GM10248 (cell line): ENCODE measurements at regions of chr10 and their contacts with region 1.

Region 1: DNA sequence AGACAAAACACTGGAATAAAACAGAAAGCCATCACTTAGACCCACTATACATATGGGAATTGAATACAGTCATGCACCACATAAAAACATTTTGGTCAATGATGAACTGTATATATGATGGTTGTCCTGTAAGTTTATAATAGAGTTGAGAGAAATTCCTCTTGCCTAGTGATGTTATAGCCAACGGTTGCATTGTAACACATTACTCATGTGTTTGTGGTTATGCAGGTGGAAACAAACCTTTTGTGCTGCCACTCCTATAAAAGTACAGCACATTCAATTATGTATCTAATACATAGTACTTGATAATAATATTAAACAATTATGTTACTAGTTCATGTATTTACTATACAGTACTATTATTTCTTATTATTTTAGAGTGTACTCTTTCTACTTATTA is 381.2 kb upstream of the MBL2 start:
- DNase-seq: no peak
- CTCF ChIP-seq: no peak

Region 2: GRCh38 chr10:52801947-52802346 is 351.9 kb before region 1 on chr10:
- CTCF ChIA-PET with region 1: no interaction called
- POLR2A ChIA-PET with region 1: no interaction called
- DNase-seq: no peak
- CTCF ChIP-seq: no peak

Region 3: DNA sequence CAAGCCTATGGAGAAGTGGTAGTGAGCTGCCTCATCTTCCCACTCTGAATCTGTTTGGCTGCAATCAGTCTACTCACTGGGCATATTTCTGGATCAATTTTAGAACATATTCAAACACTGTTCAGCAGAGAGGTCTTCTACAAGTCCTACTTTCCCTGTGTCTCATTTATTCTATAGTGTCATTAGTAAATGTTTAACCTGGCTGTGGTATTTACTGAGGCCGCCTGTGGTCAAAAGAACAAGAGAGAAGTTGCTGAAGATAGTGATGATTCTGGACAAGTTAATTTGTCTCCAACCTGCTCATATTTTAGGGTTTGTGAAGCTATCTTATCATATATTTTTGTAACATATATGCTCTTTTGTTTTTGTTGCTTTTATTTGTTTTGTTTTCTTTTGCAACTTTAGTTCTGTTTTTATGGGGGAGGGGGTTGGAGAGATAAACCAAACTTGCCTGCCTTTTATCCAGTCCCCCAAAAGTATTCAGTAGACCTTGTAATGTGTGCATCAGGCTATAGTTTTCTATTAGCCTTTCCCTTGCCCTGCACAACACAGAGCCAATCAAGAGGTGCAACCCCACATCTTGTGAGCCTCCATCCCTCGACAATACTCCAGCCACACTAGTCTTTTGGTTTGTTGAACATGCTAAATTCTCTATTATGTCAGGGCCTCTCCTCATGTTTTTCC is 18.5 kb before region 1 on chr10:
- CTCF ChIA-PET with region 1: interaction called, 10 read pairs
- POLR2A ChIA-PET with region 1: no interaction called
- DNase-seq: no peak
- CTCF ChIP-seq: no peak

Region 4: DNA sequence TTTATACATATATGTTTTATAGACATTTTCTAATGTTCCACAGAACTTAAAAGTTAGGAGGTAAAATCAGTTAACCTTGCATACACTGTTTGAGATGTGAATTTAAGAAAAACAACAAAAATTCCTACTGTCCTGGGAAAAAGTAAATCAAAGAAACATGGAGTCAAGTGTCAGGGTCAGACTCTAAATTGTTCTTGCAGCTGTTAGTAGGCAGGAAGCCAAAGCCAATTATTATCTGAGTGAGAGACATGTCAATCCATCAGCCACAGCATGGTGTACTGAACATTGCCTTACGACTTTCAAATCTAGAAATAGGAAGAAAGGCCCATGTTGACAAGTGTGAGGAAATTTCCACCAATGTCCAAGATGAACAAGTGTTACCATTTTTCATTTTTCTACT is 79.9 kb after region 1 on chr10:
- CTCF ChIA-PET with region 1: no interaction called
- POLR2A ChIA-PET with region 1: no interaction called
- DNase-seq: no peak
- CTCF ChIP-seq: no peak